GM18951 (cell line): ENCODE measurements at regions of chr11 and their contacts with region 1.

Region 1: GRCh38 chr11:75204685-75205563 is 35.6 kb upstream of the TPBGL start:
- POLR2A ChIP-seq: no peak

Region 2: GRCh38 chr11:74929431-74930363 is 275.2 kb before region 1 on chr11:
- in situ Hi-C with region 1: loop called (anchors 10 kb)
- POLR2A ChIP-seq: no peak

Region 3: DNA sequence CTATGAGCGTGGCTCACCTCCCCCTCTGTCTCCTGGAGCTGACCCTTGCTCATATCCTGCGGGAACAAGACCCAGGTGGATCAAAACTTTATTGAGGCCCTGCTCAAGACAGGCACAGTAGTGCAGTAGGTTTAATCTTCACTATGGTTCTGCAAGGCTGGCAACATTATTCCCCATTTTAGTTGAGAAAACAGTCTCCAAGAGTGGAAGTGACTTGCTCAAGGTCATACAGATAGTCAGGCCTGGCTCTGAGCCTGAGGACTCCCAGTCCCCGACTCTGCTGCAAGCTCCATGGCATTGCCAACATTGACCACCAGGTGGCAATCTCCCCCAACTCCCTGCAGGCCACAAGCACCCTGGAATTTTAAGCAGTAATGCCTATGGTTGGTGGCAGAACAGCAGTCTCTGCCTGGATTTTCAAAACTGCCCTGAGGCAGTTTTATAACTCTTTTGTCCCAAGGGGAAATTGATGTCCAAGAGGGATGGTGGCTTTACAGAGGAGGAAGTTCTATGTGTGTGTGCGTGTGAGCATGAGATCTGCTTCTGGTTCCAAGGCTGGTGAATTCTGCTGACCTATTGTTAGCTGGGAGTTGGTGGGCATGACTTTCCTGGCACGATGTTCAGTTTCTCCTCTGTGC is 182.0 kb before region 1 on chr11:
- in situ Hi-C with region 1: loop called (anchors 10 kb)
- POLR2A ChIP-seq: no peak

Region 4: DNA sequence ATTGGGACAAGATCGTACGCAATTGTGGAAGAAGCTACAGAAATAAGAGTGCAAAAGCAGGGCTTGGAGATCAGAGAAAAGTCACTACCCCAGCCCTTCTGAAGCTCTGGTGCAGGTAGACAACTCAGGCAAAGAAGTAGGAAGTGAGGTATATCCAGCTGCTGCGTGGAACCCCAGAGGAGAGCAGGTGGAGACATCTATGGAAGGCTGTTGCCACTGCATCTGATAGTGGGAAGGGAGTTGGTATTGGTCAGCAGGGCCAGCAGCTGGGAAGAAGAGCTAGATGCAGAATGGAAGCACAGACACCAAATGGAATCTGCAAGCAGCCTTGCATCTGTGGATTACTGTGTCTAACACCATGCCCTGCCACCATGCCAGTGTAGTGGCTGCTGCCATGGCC is 836.3 kb after region 1 on chr11:
- in situ Hi-C with region 1: no loop called
- POLR2A ChIP-seq: no peak